ENCODE measurements at regions of chr4 and their contacts with region 1.

Region 1: DNA sequence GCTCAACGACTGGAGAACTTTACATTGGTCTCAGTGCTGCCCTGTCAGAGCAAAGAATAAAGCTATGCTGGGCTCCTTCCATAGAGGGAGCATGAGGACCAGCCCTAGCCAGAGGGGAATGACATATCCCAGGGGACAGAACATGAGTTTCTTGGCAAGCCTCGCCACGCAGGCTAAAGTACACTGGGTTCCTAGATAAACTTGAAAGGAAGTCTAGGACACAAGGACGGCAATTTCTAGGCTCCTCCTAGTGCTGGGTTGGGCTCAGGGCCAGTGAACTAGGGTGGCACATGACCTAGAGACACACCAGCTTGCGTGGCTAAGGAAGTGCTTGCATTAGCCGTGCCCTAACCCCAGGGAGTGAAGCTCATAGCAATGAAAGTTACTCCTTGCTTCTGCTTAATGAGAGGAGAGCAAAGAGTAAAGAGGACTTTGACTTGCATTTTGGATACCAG is 141.0 kb downstream of the MAB21L2 start:
- DNase-seq: peak; percentile 88 to 95
- ATAC-seq: peak; percentile 99

Region 2: GRCh38 chr4:150874338-150875226 is 151.6 kb after region 1 on chr4:
- intact Hi-C with region 1: loop called in 1 of 2 experiments (anchors 10 kb)
- DNase-seq: no peak
- ATAC-seq: no peak